Activated CD8-positive, alpha-beta T cell treated with anti-CD3 and anti-CD28 coated beads, Interleukin-2, amount 10 ng/mL, durations not matched to agents 7 days and 5 days (primary cell): ENCODE measurements at regions of chr20 and their contacts with region 1.

Region 1: GRCh38 chr20:59948828-59949720 is 8.9 kb downstream of the FAM217B start:
- DNase-seq: peak; percentile 69
- ATAC-seq: peak; percentile 78
- H3K4me3 Mint-ChIP-seq: peak overlapping the region; percentile 73
- H3K27ac Mint-ChIP-seq: peak overlapping the region; percentile 95
- H3K4me1 Mint-ChIP-seq: peaks cover 23% of the 10 kb centered on the region
- H3K27me3 Mint-ChIP-seq: no peaks in the 10 kb centered on the region

Region 2: GRCh38 chr20:59903621-59904020 is 45.5 kb before region 1 on chr20:
- CTCF ChIA-PET with region 1: no interaction called
- POLR2A ChIA-PET with region 1: no interaction called
- DNase-seq: no peak
- ATAC-seq: no peak
- H3K4me3 Mint-ChIP-seq: no peak overlapping the region
- H3K27ac Mint-ChIP-seq: no peak overlapping the region
- H3K4me1 Mint-ChIP-seq: no peaks in the 10 kb centered on the region
- H3K27me3 Mint-ChIP-seq: peaks cover 6% of the 10 kb centered on the region

Region 3: DNA sequence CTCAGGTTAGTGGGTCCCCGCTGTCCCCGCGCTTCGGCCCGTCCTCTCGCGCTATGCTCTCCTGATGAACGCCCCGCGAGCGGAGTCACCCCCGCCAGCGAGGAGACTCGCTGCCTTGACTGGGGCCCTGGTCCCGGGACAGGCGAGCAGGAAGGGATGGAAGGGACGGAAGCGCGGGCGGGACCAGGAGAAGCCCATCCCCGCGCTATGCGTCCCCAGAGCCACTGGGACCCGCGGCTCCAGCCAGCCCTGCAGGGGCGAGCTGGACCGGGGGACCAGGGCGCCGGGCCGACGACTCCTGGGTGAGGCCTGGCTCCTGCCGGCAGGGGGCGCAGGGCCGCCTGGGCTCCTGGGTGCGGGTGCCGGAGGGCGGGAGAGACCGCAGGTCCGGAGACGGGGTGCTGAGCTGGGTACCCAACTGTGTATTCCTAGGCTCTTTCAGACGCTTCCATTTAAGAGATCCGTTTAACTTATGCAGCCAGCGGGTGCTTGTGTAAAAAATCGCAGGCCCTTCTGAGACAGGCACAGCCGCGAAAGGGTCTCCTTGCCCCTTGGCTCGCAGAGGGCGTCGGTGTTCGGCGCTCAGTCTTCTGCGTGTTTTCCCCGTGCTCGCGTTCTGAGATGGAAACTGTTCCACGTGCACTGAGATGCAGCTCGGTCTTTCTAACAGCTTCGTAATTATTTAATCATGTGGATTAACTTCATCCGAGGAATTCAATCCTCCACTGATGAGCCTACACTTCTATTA is 15.1 kb before region 1 on chr20:
- CTCF ChIA-PET with region 1: interaction called, 39 read pairs
- POLR2A ChIA-PET with region 1: no interaction called
- DNase-seq: peak; percentile 78
- ATAC-seq: peak; percentile 92
- H3K4me3 Mint-ChIP-seq: peak overlapping the region; percentile 67
- H3K27ac Mint-ChIP-seq: peak overlapping the region; percentile 69
- H3K4me1 Mint-ChIP-seq: peaks cover 25% of the 10 kb centered on the region
- H3K27me3 Mint-ChIP-seq: peaks cover 7% of the 10 kb centered on the region